ENCODE measurements at regions of chr14 and their contacts with region 1.

Region 1: GRCh38 chr14:54773171-54773975 is 129.3 kb downstream of the GCH1 start:
- DNase-seq: peak; percentile 91
- H3K4me3 Mint-ChIP-seq: peak overlapping the region; percentile 44
- H3K27ac Mint-ChIP-seq: peak overlapping the region; percentile 80
- H3K4me1 Mint-ChIP-seq: peaks cover 42% of the 10 kb centered on the region
- H3K27me3 Mint-ChIP-seq: peaks cover 4% of the 10 kb centered on the region

Region 2: DNA sequence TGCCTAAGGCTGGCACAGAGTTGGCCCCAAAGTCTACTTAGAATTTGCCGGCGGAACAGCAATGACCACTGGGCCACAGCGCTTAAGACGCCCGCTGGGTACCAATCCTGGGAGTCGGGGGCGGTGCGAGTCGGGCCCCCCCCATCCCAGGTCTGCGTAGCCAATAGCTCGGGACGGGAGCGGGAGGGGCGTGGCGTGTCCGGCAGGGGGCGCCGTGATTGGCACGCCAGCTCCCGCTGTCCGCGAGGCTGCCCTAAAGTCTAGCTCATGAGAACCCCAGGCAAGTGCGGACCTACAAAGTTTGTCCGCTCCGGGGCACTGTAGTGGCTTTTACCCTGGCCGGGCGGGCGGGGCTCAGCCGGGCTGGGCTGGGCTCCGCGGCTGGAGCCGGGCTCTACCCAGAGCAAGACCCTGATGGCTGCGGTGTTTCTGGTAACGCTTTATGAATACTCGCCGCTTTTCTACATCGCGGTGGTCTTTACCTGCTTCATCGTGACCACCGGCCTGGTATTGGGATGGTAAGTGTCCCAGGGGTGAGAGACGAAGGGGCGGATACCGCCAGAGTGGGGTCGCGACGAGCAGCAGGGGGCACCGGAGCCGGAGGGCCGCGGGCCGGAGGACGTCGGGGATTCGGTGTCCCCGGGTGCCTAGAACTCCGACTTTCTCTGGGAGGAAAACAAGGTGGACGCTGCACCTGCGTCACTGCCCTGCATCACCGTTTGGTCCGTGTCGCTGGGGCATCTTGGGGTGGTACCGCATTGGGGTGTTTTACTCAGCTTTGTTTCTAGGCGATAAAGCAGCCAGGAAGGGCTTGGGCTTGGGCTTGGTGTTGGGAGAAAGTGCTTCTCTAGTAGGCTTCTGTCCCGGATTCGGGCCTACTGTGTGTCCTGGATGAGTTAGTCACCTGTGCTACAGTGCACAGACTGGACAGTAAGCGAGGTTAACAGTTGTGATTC is 263.5 kb before region 1 on chr14 and contains the start of gene CGRRF1:
- CTCF ChIA-PET with region 1: interaction called, 14 read pairs
- POLR2A ChIA-PET with region 1: no interaction called
- intact Hi-C with region 1: loop called (anchors 1 kb)
- DNase-seq: peak; percentile 99
- H3K4me3 Mint-ChIP-seq: peak within 1 kb of the TSS; percentile 94
- H3K27ac Mint-ChIP-seq: peak within 1 kb of the TSS; percentile 76
- H3K4me1 Mint-ChIP-seq: peaks cover 39% of the 10 kb centered on the region
- H3K27me3 Mint-ChIP-seq: no peaks in the 10 kb centered on the region
- total RNA-seq, gene CGRRF1: 13.7 to 15.1 TPM

Region 3: DNA sequence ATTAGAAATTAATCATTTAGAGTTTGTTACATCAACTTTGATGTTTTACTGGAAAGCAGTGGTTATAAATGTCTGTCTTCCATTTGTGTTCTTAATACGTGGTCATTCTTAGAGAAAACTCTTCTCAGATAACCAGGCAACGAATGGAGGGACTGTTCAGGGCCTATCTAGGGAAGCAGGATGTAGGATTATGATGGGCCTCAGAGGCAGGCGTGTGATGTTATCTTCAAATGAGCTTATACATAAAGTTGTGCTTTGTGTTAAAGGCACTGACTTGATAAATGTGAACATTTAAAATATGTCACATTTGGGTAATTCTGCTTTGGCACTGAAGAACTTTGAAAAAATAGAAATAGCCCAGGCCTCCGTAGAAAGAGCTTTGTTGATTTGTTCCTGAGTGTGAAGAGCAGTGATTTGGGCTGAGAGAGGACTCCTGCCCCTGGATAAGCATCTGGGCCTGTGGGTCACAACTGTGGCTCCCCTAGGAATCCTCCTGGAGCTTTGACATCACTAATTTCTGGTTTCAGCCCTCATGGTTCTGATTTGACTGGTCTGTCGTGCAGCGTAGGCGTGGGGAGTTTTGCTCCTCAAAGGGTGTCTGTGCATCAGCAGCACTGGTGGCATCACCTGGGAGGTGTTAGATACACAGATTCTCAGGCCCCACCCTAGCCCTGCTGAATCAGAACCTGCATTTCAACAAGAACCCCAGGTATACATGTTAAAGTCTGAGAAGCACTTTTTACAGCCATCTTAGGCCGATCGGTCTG is 151.0 kb before region 1 on chr14:
- CTCF ChIA-PET with region 1: interaction called, 19 read pairs
- POLR2A ChIA-PET with region 1: no interaction called
- intact Hi-C with region 1: loop called (anchors 1 kb)
- DNase-seq: peak; percentile 89
- H3K4me3 Mint-ChIP-seq: no peak overlapping the region
- H3K27ac Mint-ChIP-seq: no peak overlapping the region
- H3K4me1 Mint-ChIP-seq: peaks cover 37% of the 10 kb centered on the region
- H3K27me3 Mint-ChIP-seq: no peaks in the 10 kb centered on the region

Region 4: GRCh38 chr14:54698966-54699530 is 74.3 kb before region 1 on chr14:
- CTCF ChIA-PET with region 1: interaction called, 22 read pairs
- POLR2A ChIA-PET with region 1: no interaction called
- intact Hi-C with region 1: no loop called
- DNase-seq: no peak
- H3K4me3 Mint-ChIP-seq: no peak overlapping the region
- H3K27ac Mint-ChIP-seq: no peak overlapping the region
- H3K4me1 Mint-ChIP-seq: peaks cover 6% of the 10 kb centered on the region
- H3K27me3 Mint-ChIP-seq: peaks cover 11% of the 10 kb centered on the region

Region 5: DNA sequence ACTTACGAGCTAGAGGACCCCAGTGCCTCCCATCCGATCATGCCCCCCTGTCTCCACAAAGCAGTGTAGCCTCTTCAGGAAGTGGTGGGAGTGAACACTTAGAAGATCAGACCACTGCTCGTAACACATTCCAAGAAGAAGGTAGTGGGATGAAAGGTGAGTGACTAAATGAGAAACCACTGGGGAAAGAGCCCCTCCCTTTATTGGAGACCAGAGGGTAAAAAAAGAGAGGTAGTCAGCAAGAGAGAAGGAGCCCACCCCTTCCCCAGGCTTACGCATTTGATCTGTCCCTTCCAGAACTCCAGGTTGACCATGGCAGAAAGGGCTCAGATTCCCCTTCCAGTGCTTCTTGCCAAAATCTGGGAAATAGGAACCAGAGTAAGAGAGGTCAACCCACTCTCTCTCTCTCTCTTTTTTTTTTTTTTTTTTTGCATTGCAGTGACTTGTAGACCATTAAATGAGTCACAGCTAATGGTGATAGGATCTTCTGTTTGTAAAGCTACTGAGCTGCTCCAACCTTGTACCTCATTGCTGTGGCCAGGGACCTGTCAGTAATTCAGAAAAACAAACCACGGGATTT is 36.2 kb before region 1 on chr14:
- CTCF ChIA-PET with region 1: interaction called, 74 read pairs
- POLR2A ChIA-PET with region 1: no interaction called
- intact Hi-C with region 1: loop called (anchors 1 kb)
- DNase-seq: peak; percentile 34
- H3K4me3 Mint-ChIP-seq: no peak overlapping the region
- H3K27ac Mint-ChIP-seq: peak overlapping the region; percentile 38
- H3K4me1 Mint-ChIP-seq: peaks cover 35% of the 10 kb centered on the region
- H3K27me3 Mint-ChIP-seq: no peaks in the 10 kb centered on the region

Region 6: GRCh38 chr14:54792288-54792687 is 18.9 kb after region 1 on chr14:
- CTCF ChIA-PET with region 1: interaction called, 35 read pairs
- POLR2A ChIA-PET with region 1: no interaction called
- intact Hi-C with region 1: no loop called
- DNase-seq: no peak
- H3K4me3 Mint-ChIP-seq: no peak overlapping the region
- H3K27ac Mint-ChIP-seq: no peak overlapping the region
- H3K4me1 Mint-ChIP-seq: no peaks in the 10 kb centered on the region
- H3K27me3 Mint-ChIP-seq: no peaks in the 10 kb centered on the region

Region 7: DNA sequence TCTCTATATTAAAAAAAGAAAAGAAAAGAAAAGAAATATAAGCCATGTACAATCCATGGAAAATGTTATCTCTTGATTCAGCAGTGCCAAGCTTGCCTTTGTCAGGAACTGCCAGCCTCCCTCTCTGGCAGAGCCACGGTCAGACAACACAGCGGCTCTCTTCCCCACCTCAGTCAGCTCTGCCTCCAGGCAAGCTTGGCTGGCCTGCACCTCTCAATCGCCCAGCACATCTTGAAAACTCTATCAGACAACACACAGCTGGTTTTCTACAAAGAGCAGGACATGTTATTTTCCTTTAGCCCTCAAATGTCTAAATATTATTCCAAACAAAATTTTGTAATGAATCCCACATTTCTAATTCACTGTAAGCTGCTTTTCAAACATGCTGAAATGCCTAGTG is 149.2 kb after region 1 on chr14:
- CTCF ChIA-PET with region 1: no interaction called
- POLR2A ChIA-PET with region 1: no interaction called
- intact Hi-C with region 1: no loop called
- DNase-seq: no peak
- H3K4me3 Mint-ChIP-seq: no peak overlapping the region
- H3K27ac Mint-ChIP-seq: no peak overlapping the region
- H3K4me1 Mint-ChIP-seq: no peaks in the 10 kb centered on the region
- H3K27me3 Mint-ChIP-seq: no peaks in the 10 kb centered on the region